A549 (cell line): ENCODE measurements at regions of chr14 and their contacts with region 1.

Region 1: GRCh38 chr14:21525962-21526671 is at the start of gene SALL2:
- DNase-seq: peak; percentile 11 to 31
- ATAC-seq: peak; percentile 67 to 87; a peak in 5 of 6 replicates
- H3K4me3 ChIP-seq: peak within 1 kb of the TSS; percentile 52
- H3K27ac ChIP-seq: peak within 1 kb of the TSS; percentile 60 to 88
- H3K4me1 ChIP-seq: 0 out of 3 replicates have a peak, but pooled peaks cover 3% of the 10 kb centered on the region
- CTCF ChIP-seq: no peak
- EP300 ChIP-seq: no peak
- POLR2A ChIP-seq: peak; percentile 8; the same call in 1 of the 2 replicates
- RAD21 ChIP-seq: no peak
- polyA plus RNA-seq, gene SALL2: 2.8 and 3.8 TPM in 2 replicates

Region 2: GRCh38 chr14:21308479-21309237 is 217.5 kb before region 1 on chr14:
- CTCF ChIA-PET with region 1: no interaction called
- POLR2A ChIA-PET with region 1: no interaction called
- DNase-seq: peak; percentile 50 to 97
- ATAC-seq: peak; percentile 94 to 95
- H3K4me3 ChIP-seq: peak overlapping the region; percentile 35
- H3K27ac ChIP-seq: peak overlapping the region; percentile 77 to 89
- H3K4me1 ChIP-seq: peaks cover 18% of the 10 kb centered on the region
- CTCF ChIP-seq: no peak
- EP300 ChIP-seq: no peak
- POLR2A ChIP-seq: peak; percentile 41
- RAD21 ChIP-seq: no peak

Region 3: GRCh38 chr14:21510735-21511657 is 15.1 kb before region 1 on chr14 and contains the start of gene METTL3:
- CTCF ChIA-PET with region 1: interaction called, 14 read pairs
- POLR2A ChIA-PET with region 1: interaction called, 43 read pairs
- DNase-seq: peak; percentile 95 to 99
- ATAC-seq: peak; percentile 99
- H3K4me3 ChIP-seq: peak within 1 kb of the TSS; percentile 73
- H3K27ac ChIP-seq: peak within 1 kb of the TSS; percentile 79 to 91
- H3K4me1 ChIP-seq: peaks cover 6% of the 10 kb centered on the region; the same call in 2 of the 3 replicates
- CTCF ChIP-seq: no peak
- EP300 ChIP-seq: no peak
- POLR2A ChIP-seq: peak; percentile 82
- RAD21 ChIP-seq: no peak
- polyA plus RNA-seq, gene METTL3: 103 and 118 TPM in 2 replicates

Region 4: GRCh38 chr14:21557084-21557901 is 31.2 kb after region 1 on chr14:
- CTCF ChIA-PET with region 1: interaction called, 10 read pairs
- POLR2A ChIA-PET with region 1: no interaction called
- DNase-seq: peak; percentile 68 to 92
- ATAC-seq: peak; percentile 96
- H3K4me3 ChIP-seq: peak overlapping the region; percentile 36
- H3K27ac ChIP-seq: peak overlapping the region; percentile 57 to 67
- H3K4me1 ChIP-seq: peaks cover 11% of the 10 kb centered on the region; the same call in 2 of the 3 replicates
- CTCF ChIP-seq: peak; percentile 84
- EP300 ChIP-seq: no peak
- POLR2A ChIP-seq: no peak
- RAD21 ChIP-seq: peak; percentile 87 to 90